GM12878 (cell line): ENCODE measurements at regions of chr15 and their contacts with region 1.

Region 1: DNA sequence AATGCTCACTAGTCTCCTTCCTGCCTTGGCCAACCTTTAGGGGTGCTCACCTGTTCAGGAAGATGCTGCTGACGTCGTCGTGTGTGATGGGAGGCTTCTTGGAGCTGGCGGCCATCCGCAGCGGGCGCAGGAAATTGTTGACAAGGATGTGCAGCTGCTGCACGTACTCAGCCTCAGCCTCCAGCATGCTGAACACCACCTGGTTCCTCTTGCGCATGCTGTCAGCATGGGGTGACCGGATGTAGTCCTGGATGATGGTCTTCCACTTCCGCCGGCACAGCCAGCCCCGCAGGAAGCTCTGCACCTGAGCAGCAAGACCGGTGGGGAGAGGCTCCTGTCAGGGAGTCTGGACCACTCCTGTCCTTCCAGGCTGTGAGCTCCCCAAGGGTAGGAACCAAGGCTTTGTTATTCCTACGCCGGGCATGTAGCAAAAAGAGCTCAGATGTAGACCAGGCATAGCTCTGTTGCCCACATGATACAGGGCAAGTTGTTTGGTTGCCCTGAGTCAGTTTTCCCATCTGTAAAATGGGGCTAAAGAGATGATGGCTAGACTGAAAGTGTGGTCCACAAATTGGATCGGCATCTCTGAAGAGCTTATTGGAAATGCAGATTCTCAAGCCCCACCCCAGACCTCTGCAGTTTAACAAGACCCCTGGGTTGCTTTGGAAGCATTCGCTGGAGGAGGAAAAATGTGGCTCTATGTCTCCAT is 43.7 kb downstream of the RASGRF1 start:
- DNase-seq: no peak
- ATAC-seq: no peak
- H3K4me3 ChIP-seq: no peak overlapping the region
- H3K27ac ChIP-seq: no peak overlapping the region
- H3K4me1 ChIP-seq: no peaks in the 10 kb centered on the region
- H3K27me3 ChIP-seq: peaks cover 0 to 3% of the 10 kb centered on the region in 2 experiments; a peak in 2 of 4 replicates
- CTCF ChIP-seq: no peak
- EP300 ChIP-seq: no peak
- POLR2A ChIP-seq: no peak
- RAD21 ChIP-seq: no peak

Region 2: GRCh38 chr15:79035111-79035601 is 11.7 kb before region 1 on chr15:
- CTCF ChIA-PET with region 1: interaction called, 10 read pairs
- POLR2A ChIA-PET with region 1: no interaction called
- RAD21 ChIA-PET with region 1: no interaction called
- SMC1A ChIA-PET with region 1: no interaction called
- in situ Hi-C with region 1: no loop called
- intact Hi-C with region 1: no loop called
- DNase-seq: peak; percentile 31
- ATAC-seq: peak; percentile 84
- H3K4me3 ChIP-seq: no peak overlapping the region
- H3K27ac ChIP-seq: no peak overlapping the region
- H3K4me1 ChIP-seq: peaks cover 10% of the 10 kb centered on the region
- H3K27me3 ChIP-seq: peaks cover 0 to 2% of the 10 kb centered on the region in 2 experiments; a peak in 2 of 4 replicates
- CTCF ChIP-seq: peak; percentile 13 to 55 (median 29); a peak in 5 of 6 replicates
- EP300 ChIP-seq: no peak
- POLR2A ChIP-seq: no peak
- RAD21 ChIP-seq: peak; percentile 56